Endothelial cell of umbilical vein (primary cell): ENCODE measurements at regions of chr15 and their contacts with region 1.

Region 1: GRCh38 chr15:75029378-75030022 is 6.1 kb downstream of the PPCDC start:
- DNase-seq: peak; percentile 96
- H3K4me3 ChIP-seq: peak overlapping the region in 1 of 3 experiments; percentile 30
- H3K27ac ChIP-seq: peak overlapping the region; percentile 99
- H3K4me1 ChIP-seq: peaks cover 37% of the 10 kb centered on the region
- H3K27me3 ChIP-seq: no peaks in the 10 kb centered on the region
- CTCF ChIP-seq: peak; percentile 94
- POLR2A ChIP-seq: no peak

Region 2: DNA sequence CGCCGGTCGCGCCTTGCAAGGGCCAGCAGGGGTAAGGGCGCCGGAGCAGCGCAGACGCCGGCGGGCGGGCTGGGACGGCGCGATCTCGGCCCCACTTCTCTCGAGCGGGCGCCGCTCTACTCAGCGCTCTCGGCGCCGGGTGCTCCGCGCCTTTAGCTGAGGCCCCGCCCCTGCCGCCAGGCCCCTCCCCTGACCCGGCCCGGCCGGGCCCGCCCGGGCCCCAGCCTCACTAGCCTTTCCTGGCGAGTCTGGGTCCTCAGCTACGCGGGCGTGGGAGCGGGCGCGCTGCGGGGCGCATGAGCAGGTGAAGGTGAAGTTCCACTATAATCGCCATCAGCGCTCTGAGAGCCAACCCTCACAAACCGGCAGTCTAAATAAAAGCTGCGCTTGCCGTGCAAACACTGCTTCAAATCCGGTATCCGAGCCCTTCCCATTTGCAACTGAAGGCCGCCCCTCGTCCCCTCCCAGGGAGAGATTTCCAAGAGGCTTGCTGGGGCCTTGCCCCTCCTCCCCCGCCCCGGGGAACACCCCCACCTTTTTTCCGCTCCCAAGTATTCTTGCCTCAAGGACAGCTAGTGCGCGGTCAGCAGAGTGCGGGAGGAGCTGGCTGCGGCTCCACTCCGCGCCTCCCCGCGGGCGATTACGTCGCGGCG is 72.7 kb before region 1 on chr15 and contains the start of gene RPP25:
- CTCF ChIA-PET with region 1: interaction called, 7 read pairs
- POLR2A ChIA-PET with region 1: no interaction called
- dilution Hi-C with region 1: no loop called
- intact Hi-C with region 1: loop called (anchors 2 kb)
- DNase-seq: peak; percentile 76
- H3K4me3 ChIP-seq: peak within 1 kb of the TSS; percentile 44 to 56 (median 53)
- H3K27ac ChIP-seq: peak within 1 kb of the TSS; percentile 46
- H3K4me1 ChIP-seq: peaks cover 58% of the 10 kb centered on the region
- H3K27me3 ChIP-seq: peaks cover 0 to 3% of the 10 kb centered on the region in 2 experiments
- CTCF ChIP-seq: no peak
- POLR2A ChIP-seq: peak; percentile 80
- total RNA-seq, gene RPP25: 13.7 and 13.8 TPM in 2 replicates

Region 3: GRCh38 chr15:74978503-74978902 is 51.0 kb before region 1 on chr15:
- CTCF ChIA-PET with region 1: no interaction called
- POLR2A ChIA-PET with region 1: no interaction called
- dilution Hi-C with region 1: no loop called
- intact Hi-C with region 1: no loop called
- DNase-seq: no peak
- H3K4me3 ChIP-seq: no peak overlapping the region
- H3K27ac ChIP-seq: no peak overlapping the region
- H3K4me1 ChIP-seq: no peaks in the 10 kb centered on the region
- H3K27me3 ChIP-seq: no peaks in the 10 kb centered on the region
- CTCF ChIP-seq: no peak
- POLR2A ChIP-seq: no peak

Region 4: DNA sequence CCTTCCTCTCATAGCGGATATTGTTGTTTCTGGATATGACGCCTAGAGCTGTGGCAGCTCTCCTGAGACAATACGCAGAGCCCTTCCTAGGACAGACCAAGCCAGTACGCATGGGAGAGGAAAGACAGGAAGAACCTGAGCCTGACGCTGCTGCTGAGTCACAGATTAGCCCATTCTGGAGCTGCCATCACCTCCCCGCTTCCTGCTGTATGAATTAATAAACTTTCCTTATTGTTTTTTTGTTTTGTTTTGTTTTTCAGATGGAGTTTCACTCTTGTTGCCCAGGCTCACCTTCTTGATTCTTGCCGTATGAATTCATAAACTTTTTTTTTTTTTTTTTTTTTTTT is 60.9 kb after region 1 on chr15:
- CTCF ChIA-PET with region 1: interaction called, 9 read pairs
- POLR2A ChIA-PET with region 1: no interaction called
- dilution Hi-C with region 1: no loop called
- intact Hi-C with region 1: loop called (anchors 1 kb)
- DNase-seq: peak; percentile 93
- H3K4me3 ChIP-seq: no peak overlapping the region
- H3K27ac ChIP-seq: peak overlapping the region; percentile 90
- H3K4me1 ChIP-seq: peaks cover 11% of the 10 kb centered on the region
- H3K27me3 ChIP-seq: no peaks in the 10 kb centered on the region
- CTCF ChIP-seq: no peak
- POLR2A ChIP-seq: peak; percentile 46

Region 5: GRCh38 chr15:75215107-75216004 is 185.9 kb after region 1 on chr15:
- CTCF ChIA-PET with region 1: interaction called, 213 read pairs
- POLR2A ChIA-PET with region 1: no interaction called
- dilution Hi-C with region 1: no loop called
- intact Hi-C with region 1: no loop called
- DNase-seq: no peak
- H3K4me3 ChIP-seq: no peak overlapping the region
- H3K27ac ChIP-seq: no peak overlapping the region
- H3K4me1 ChIP-seq: no peaks in the 10 kb centered on the region
- H3K27me3 ChIP-seq: no peaks in the 10 kb centered on the region
- CTCF ChIP-seq: no peak
- POLR2A ChIP-seq: no peak

Region 6: DNA sequence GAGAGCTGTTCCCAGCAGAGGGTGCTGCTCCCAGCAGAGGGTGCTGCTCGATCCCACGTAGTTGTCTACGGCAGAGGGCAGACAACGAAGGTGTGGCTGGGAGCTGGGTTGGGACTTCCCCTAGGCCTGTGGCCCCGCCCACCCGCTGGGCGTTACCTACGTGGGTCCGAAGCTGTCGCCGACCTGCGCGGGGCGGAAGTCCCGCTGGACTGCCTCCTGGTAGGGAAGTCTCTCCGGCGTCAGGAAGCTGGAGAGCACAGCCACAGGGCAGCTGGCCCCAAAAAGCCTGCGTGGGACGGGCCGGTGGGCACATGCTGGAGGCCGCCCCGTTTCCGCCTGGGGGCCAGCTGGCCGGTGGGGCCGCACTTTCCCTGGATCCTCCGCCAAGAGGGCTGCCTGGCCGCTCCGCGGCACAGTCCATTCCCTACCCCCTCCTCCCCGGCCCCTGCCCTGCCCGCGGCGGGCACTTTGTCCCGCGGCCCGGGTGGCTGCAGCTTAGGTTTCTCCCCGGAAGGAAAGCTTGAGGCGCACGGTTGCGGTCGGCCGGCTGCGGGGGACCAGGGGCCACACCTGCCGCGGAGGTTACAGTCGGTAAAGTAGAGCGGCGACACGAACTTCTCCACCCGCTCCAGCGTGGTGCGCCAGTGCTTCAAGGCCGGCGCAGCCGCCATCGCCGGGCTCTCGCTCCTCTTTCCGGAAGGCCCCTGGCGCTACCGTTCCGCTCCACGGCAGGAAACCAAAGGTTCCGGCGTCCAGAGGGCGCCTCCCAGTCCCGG is 338.6 kb after region 1 on chr15 and contains the start of gene MAN2C1:
- CTCF ChIA-PET with region 1: interaction called, 15 read pairs
- POLR2A ChIA-PET with region 1: no interaction called
- dilution Hi-C with region 1: no loop called
- intact Hi-C with region 1: loop called (anchors 5 kb)
- DNase-seq: peak; percentile 93
- H3K4me3 ChIP-seq: peak within 1 kb of the TSS; percentile 50 to 83 (median 51)
- H3K27ac ChIP-seq: peak within 1 kb of the TSS; percentile 79
- H3K4me1 ChIP-seq: peaks cover 15% of the 10 kb centered on the region
- H3K27me3 ChIP-seq: no peaks in the 10 kb centered on the region
- CTCF ChIP-seq: peak; percentile 63 to 76
- POLR2A ChIP-seq: peak; percentile 93
- total RNA-seq, gene MAN2C1: 248 TPM in 2 replicates